ENCODE measurements at regions of chr10 and their contacts with region 1.

Region 1: GRCh38 chr10:72048450-72049124 is 39.8 kb downstream of the SPOCK2 start:
- DNase-seq: peak; percentile 96

Region 2: DNA sequence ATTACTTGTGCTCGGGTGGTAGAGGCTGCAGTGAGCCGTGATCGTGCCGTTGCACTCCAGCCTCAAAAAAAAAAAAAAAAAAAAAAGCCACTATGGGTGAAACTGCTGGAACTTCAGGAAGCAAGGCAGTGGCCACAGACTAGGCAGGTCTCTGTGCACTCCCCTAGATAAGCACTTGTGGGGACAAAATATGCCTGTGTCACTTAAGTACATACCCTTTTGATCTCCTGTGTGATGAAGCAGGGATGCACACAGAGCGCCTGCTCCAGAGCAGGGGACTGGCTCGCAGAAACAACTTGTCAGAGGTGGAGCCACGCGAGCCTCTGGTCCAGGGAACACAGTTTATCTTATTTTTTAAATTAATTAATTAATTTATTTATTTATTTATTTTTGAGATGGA is 154.7 kb before region 1 on chr10:
- intact Hi-C with region 1: loop called (anchors 5 to 10 kb)
- DNase-seq: peak; percentile 32

Region 3: DNA sequence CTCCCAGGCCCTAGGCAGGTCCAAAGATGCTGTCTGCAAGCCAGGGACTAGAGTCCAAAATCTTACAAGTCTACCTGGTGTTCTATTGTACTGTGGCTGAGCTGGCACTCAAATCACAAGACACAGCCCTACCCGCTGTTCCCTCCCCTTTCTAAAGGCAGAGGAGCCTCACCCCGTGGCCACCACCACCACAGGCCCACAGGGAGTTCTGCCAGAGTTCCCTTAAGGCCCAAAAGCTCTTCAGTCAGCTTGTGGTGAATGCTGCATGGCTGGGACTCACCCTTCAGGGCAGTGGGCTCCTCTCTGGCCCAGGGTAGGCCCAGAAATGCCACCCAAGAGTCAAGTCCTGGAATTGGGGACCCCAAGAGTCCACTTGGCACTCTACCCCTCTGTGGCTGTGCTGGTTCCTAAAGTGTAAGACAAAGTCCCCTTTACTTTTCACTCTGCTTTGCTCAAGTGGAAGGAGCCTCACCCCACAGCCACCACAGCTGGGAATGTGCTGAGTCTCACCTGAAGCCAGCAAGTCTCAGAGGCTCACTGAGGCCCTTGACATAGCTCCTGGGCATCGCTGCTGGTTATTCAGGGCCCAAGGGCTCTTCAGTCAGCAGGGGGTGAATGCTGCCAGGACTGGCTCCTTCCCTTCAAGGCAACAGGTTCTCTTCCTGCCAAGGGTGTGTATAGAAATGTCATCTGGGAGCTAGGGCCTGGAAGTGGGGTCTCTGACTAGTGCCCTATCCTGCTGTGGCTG is 148.7 kb before region 1 on chr10:
- intact Hi-C with region 1: loop called (anchors 5 to 10 kb)
- DNase-seq: peak; percentile 61

Region 4: GRCh38 chr10:71957546-71958275 is 90.9 kb before region 1 on chr10:
- intact Hi-C with region 1: loop called (anchors 5 kb)
- DNase-seq: no peak

Region 5: GRCh38 chr10:71963756-71964668 is 84.6 kb before region 1 on chr10 and contains the start of gene CHST3:
- intact Hi-C with region 1: loop called in 1 of 2 experiments (anchors 5 kb)
- DNase-seq: peak; percentile 91
- total RNA-seq, gene CHST3: 34.9 to 37.7 TPM

Region 6: GRCh38 chr10:72016608-72017312 is 31.8 kb before region 1 on chr10:
- intact Hi-C with region 1: no loop called
- DNase-seq: no peak